PC-9 (cell line): ENCODE measurements at regions of chr2 and their contacts with region 1.

Region 1: GRCh38 chr2:172465417-172466334 is 38.3 kb downstream of the ITGA6 start:
- DNase-seq: peak; percentile 78 to 91
- H3K4me3 ChIP-seq: no peak overlapping the region
- H3K27ac ChIP-seq: peak overlapping the region; percentile 61
- H3K4me1 ChIP-seq: peaks cover 49% of the 10 kb centered on the region
- H3K27me3 ChIP-seq: no peaks in the 10 kb centered on the region
- CTCF ChIP-seq: peak; percentile 100

Region 2: GRCh38 chr2:171598713-171599319 is 866.9 kb before region 1 on chr2:
- CTCF ChIA-PET with region 1: no interaction called
- POLR2A ChIA-PET with region 1: no interaction called
- intact Hi-C with region 1: loop called (anchors 2 kb)
- DNase-seq: peak; percentile 47 to 63
- H3K4me3 ChIP-seq: no peak overlapping the region
- H3K27ac ChIP-seq: no peak overlapping the region
- H3K4me1 ChIP-seq: no peaks in the 10 kb centered on the region
- H3K27me3 ChIP-seq: peaks cover 17% of the 10 kb centered on the region; the same call in 1 of the 2 replicates
- CTCF ChIP-seq: peak; percentile 100

Region 3: GRCh38 chr2:171966268-171966667 is 499.4 kb before region 1 on chr2:
- CTCF ChIA-PET with region 1: no interaction called
- POLR2A ChIA-PET with region 1: no interaction called
- intact Hi-C with region 1: loop called (anchors 10 kb)
- DNase-seq: no peak
- H3K4me3 ChIP-seq: no peak overlapping the region
- H3K27ac ChIP-seq: no peak overlapping the region
- H3K4me1 ChIP-seq: no peaks in the 10 kb centered on the region
- H3K27me3 ChIP-seq: no peaks in the 10 kb centered on the region
- CTCF ChIP-seq: no peak

Region 4: GRCh38 chr2:172172513-172173173 is 293.0 kb before region 1 on chr2:
- CTCF ChIA-PET with region 1: interaction called, 59 read pairs
- POLR2A ChIA-PET with region 1: interaction called, 3 read pairs
- intact Hi-C with region 1: loop called (anchors 1 kb)
- DNase-seq: peak; percentile 75 to 98
- H3K4me3 ChIP-seq: peak overlapping the region; percentile 76
- H3K27ac ChIP-seq: no peak overlapping the region
- H3K4me1 ChIP-seq: peaks cover 17% of the 10 kb centered on the region
- H3K27me3 ChIP-seq: no peaks in the 10 kb centered on the region
- CTCF ChIP-seq: peak; percentile 98

Region 5: DNA sequence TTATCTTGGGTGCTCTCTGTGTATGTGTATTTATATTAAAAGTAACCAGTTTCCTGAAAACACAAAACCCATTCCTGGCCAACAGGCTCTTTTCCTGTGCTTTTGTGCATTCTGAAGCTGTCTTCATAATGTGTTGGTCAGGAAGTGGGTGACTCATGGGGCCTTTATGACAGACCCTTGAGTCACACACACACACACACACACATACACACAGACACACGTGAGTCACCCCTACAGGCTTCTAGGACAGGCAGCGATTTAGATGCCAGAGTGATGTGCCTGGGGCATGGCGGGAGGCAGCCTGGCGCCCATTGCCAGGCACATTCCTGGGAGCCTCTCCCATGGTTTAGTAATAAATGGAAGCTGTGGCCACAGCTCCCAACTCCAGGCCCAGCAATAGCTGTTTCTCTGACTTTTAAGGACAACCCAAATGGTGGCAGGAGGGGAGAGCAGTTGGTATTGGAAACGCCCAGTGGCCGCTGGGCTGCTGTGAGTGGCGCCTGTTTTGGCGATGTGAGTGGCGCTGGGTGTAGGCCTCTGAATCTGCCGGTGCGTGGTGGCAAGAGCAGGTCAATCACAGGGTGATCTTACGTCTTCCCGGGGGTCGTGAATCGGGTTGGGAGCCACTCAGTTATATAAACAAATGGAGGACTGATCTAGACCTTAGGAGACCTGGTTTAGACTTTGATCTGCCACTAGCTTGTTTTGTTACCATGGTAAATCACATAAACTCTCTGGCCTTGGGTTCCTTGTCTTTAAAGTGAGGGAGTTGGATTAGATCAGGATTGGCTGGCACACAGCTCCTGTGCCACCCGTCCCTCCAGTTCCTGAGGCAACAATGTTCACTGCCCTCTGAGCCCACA is 212.3 kb before region 1 on chr2:
- CTCF ChIA-PET with region 1: interaction called, 23 read pairs
- POLR2A ChIA-PET with region 1: no interaction called
- intact Hi-C with region 1: loop called (anchors 1 kb)
- DNase-seq: peak; percentile 99 to 100
- H3K4me3 ChIP-seq: no peak overlapping the region
- H3K27ac ChIP-seq: peak overlapping the region; percentile 65
- H3K4me1 ChIP-seq: peaks cover 62% of the 10 kb centered on the region
- H3K27me3 ChIP-seq: no peaks in the 10 kb centered on the region
- CTCF ChIP-seq: no peak

Region 6: GRCh38 chr2:172442072-172442895 is 23.4 kb before region 1 on chr2:
- CTCF ChIA-PET with region 1: interaction called, 88 read pairs
- POLR2A ChIA-PET with region 1: interaction called, 8 read pairs
- intact Hi-C with region 1: loop called (anchors 1 kb)
- DNase-seq: peak; percentile 100
- H3K4me3 ChIP-seq: peak overlapping the region; percentile 5; the same call in 1 of the 2 replicates
- H3K27ac ChIP-seq: peak overlapping the region; percentile 81
- H3K4me1 ChIP-seq: peaks cover 80% of the 10 kb centered on the region
- H3K27me3 ChIP-seq: no peaks in the 10 kb centered on the region
- CTCF ChIP-seq: no peak

Region 7: DNA sequence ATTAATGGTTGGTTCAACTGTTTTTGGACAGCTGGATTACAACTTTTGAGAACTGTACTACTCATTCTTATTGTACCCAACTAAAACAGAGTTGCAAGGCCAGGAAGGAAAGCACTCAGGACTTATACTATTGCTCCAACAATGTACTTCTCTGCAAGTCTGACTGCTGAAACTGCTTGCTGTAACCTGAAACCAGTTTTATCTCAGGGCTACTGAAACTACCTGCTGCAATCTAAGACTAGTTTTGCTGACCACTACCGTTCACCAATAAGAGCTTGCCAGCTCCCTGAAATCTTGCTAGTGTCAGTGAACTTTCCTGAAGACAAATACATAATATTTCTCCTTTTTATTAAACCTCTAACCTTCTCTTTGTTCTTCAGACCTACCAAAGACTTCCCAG is 1046.3 kb after region 1 on chr2:
- CTCF ChIA-PET with region 1: no interaction called
- POLR2A ChIA-PET with region 1: no interaction called
- intact Hi-C with region 1: no loop called
- DNase-seq: peak; percentile 6 to 68
- H3K4me3 ChIP-seq: peak overlapping the region; percentile 5; the same call in 1 of the 2 replicates
- H3K27ac ChIP-seq: peak overlapping the region; percentile 70
- H3K4me1 ChIP-seq: peaks cover 16% of the 10 kb centered on the region
- H3K27me3 ChIP-seq: peaks cover 15% of the 10 kb centered on the region; the same call in 1 of the 2 replicates
- CTCF ChIP-seq: no peak